Activated CD4-positive, alpha-beta T cell treated with anti-CD3 and anti-CD28 coated beads for 36 hours (primary cell): ENCODE measurements at regions of chr17 and their contacts with region 1.

Region 1: GRCh38 chr17:56653877-56654276 is 60.4 kb downstream of the NOG start:
- DNase-seq: peak; percentile 79
- ATAC-seq: peak; percentile 98
- H3K4me3 Mint-ChIP-seq: no peak overlapping the region
- H3K27ac Mint-ChIP-seq: no peak overlapping the region
- H3K4me1 Mint-ChIP-seq: peaks cover 6% of the 10 kb centered on the region
- H3K27me3 Mint-ChIP-seq: no peaks in the 10 kb centered on the region

Region 2: DNA sequence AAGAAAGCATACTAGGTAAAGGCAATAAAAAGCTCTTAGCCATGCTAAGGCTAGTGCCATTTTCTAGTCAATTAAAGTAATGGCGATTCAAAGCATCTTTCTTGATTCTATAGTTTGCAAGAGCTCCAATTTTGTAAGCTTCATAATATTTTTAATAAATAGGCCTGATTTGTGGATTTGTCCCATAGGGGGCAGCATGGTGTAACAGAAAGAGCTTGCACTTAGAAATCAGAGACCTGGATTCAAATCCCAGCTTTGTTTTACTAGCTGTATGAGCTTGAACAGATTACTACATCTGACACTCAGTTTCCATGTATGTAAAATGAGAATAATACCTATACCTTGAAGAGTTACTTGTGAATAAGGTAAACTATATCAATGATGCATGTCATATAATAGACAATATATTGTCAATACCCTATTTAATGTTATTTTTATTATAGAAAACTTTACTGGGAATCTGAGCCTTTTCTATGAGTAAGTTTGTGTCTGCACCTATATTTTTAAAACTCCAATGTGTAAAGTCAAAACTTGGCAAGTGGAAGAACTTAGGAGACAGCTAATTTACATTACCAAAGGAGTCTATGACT is 154.0 kb before region 1 on chr17:
- CTCF ChIA-PET with region 1: interaction called, 6 read pairs
- POLR2A ChIA-PET with region 1: no interaction called
- intact Hi-C with region 1: loop called in 1 of 2 experiments (anchors 2 kb)
- DNase-seq: peak; percentile 45
- ATAC-seq: no peak
- H3K4me3 Mint-ChIP-seq: no peak overlapping the region
- H3K27ac Mint-ChIP-seq: no peak overlapping the region
- H3K4me1 Mint-ChIP-seq: no peaks in the 10 kb centered on the region
- H3K27me3 Mint-ChIP-seq: no peaks in the 10 kb centered on the region

Region 3: DNA sequence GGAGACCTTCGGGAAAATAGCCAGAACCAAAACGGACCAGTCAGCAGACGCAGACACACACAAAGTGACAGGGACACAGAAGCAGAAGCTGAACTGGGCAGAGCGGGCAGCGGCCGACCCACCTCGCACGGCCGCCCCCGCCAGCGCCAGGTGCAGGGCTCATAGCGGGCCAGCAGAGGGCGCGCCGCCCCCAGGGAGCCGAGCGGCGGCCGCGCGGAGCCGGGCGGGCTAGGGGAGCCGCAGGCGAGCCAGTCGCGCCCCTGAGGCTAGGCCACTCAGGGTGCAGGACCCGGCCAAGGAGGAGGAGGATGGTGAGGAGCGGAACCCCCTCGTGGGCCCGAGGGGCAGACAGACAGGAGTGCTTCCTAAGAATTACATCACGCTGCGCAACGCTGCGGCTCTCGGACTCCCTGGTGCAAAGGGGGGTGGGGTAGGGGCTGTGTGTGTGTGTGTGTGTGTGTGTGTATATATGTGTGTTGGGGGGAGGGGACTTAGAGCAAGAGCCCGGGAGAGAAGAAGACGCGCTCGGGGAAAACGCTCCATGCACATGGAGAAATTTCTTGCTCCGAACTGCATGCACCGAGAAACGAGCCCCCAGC is 61.3 kb before region 1 on chr17:
- CTCF ChIA-PET with region 1: interaction called, 11 read pairs
- POLR2A ChIA-PET with region 1: no interaction called
- intact Hi-C with region 1: loop called (anchors 1 kb)
- DNase-seq: peak; percentile 82
- ATAC-seq: peak; percentile 60
- H3K4me3 Mint-ChIP-seq: peak overlapping the region; percentile 64
- H3K27ac Mint-ChIP-seq: no peak overlapping the region
- H3K4me1 Mint-ChIP-seq: peaks cover 20% of the 10 kb centered on the region
- H3K27me3 Mint-ChIP-seq: peaks cover 23% of the 10 kb centered on the region

Region 4: DNA sequence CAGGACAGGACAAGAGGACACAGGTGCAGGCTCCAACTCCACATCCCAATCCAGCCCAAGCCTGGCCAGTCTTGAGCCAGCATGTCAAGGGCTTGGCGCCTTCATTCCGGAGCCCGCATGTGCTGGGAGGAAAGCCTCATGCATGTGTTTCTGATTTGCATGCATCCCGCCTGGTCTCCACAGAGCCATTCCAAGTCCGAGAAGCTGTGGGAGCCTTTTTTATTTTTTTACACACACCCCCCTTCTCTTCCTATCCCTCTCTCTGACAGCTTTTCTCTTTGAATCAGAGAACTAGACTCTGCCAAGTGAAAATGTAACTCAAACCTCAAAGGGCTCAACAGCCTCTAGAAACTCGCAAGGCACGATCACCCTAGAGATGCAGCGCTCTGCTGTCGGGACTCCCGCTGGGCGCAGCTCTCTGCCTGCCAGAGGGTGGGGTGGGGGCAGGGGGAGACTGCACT is 15.3 kb before region 1 on chr17:
- CTCF ChIA-PET with region 1: interaction called, 11 read pairs
- POLR2A ChIA-PET with region 1: no interaction called
- intact Hi-C with region 1: no loop called
- DNase-seq: no peak
- ATAC-seq: no peak
- H3K4me3 Mint-ChIP-seq: no peak overlapping the region
- H3K27ac Mint-ChIP-seq: no peak overlapping the region
- H3K4me1 Mint-ChIP-seq: peaks cover 6% of the 10 kb centered on the region
- H3K27me3 Mint-ChIP-seq: peaks cover 2% of the 10 kb centered on the region